GM12878 (cell line): ENCODE measurements at regions of chr20 and their contacts with region 1.

Region 1: GRCh38 chr20:13302647-13303450 is 81.8 kb downstream of the ISM1 start:
- DNase-seq: no peak
- ATAC-seq: peak; percentile 99
- H3K4me3 ChIP-seq: no peak overlapping the region
- H3K27ac ChIP-seq: no peak overlapping the region
- H3K4me1 ChIP-seq: no peaks in the 10 kb centered on the region
- H3K27me3 ChIP-seq: no peaks in the 10 kb centered on the region
- CTCF ChIP-seq: peak; percentile 55 to 83 (median 70)
- EP300 ChIP-seq: no peak
- POLR2A ChIP-seq: no peak
- RAD21 ChIP-seq: peak; percentile 64

Region 2: DNA sequence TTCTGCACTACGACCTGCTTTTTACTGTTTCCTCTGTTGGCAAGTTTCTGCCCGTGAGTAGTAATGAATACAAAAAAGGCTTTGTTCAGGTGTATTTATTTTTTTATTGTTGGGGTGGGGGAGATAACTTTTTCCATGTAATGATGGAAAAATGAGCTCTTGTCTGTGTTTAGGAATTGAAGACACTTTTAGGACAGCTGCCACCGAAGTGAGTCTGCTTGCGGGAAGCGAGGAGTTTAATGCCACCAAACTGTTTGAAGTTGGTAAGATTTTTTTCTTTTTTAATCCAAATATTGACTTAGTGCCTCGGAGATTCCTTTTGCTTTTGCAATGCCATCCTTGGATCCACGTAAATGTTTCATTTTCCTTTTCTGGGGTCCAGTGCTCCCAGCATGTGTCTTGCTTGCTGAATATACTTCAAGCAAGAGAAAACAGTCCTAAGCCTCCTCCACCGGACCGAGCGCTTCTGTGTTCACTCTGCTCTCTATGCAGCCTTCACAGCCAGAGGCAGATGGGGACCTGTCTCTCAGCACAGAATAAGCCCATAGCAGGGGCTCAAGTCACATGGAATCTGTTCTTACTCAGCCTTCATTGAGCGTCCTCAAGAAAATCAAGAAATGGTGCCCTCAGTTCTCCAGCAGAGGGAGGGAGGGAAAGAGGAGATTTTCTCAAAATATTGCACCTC is 10.5 kb before region 1 on chr20:
- CTCF ChIA-PET with region 1: interaction called, 10 read pairs
- POLR2A ChIA-PET with region 1: interaction called, 3 read pairs
- RAD21 ChIA-PET with region 1: interaction called, 4 read pairs
- SMC1A ChIA-PET with region 1: interaction called, 21 read pairs
- in situ Hi-C with region 1: no loop called
- intact Hi-C with region 1: no loop called
- DNase-seq: no peak
- ATAC-seq: no peak
- H3K4me3 ChIP-seq: no peak overlapping the region
- H3K27ac ChIP-seq: no peak overlapping the region
- H3K4me1 ChIP-seq: no peaks in the 10 kb centered on the region
- H3K27me3 ChIP-seq: no peaks in the 10 kb centered on the region; a peak in 1 of 4 replicates
- CTCF ChIP-seq: no peak
- EP300 ChIP-seq: no peak
- POLR2A ChIP-seq: no peak
- RAD21 ChIP-seq: no peak

Region 3: DNA sequence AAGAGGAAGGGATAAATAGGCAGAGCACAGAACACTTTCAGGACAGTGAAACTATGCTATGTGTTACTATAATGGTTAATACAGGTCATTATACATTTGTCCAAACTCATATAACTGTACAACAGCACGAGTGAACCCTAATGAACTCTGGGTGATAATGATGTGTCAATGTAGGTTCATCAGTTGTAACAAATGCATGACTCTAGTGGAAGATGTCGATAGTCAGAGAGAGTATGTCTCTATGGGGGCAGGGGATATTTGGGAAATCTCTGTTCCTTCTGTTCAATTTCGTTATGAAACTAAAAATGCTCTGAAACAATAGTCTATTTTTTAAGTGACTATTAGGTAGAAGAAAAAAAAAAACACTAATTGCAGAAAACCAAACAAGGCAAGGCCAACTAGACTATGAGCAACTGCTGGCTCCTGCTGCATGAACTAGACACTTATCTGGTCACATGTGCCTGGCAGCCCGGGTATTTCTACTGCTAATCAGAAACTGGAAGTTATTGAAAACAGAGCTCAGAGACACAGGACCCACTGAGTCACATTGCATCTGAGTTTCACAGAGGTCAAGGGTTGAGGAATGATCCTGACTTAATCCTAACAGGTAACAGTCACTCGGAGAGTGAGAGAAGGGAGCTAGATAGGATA is 16.1 kb after region 1 on chr20:
- CTCF ChIA-PET with region 1: interaction called, 12 read pairs
- POLR2A ChIA-PET with region 1: no interaction called
- RAD21 ChIA-PET with region 1: interaction called, 9 read pairs
- SMC1A ChIA-PET with region 1: interaction called, 10 read pairs
- in situ Hi-C with region 1: no loop called
- intact Hi-C with region 1: no loop called
- DNase-seq: no peak
- ATAC-seq: peak; percentile 68
- H3K4me3 ChIP-seq: no peak overlapping the region
- H3K27ac ChIP-seq: no peak overlapping the region
- H3K4me1 ChIP-seq: no peaks in the 10 kb centered on the region; the same call in 1 of the 2 replicates
- H3K27me3 ChIP-seq: no peaks in the 10 kb centered on the region
- CTCF ChIP-seq: no peak
- EP300 ChIP-seq: 0 out of 4 replicates have a peak, but pooled peaks of 1 of the 2 experiments have one; percentile 34
- POLR2A ChIP-seq: no peak
- RAD21 ChIP-seq: no peak

Region 4: DNA sequence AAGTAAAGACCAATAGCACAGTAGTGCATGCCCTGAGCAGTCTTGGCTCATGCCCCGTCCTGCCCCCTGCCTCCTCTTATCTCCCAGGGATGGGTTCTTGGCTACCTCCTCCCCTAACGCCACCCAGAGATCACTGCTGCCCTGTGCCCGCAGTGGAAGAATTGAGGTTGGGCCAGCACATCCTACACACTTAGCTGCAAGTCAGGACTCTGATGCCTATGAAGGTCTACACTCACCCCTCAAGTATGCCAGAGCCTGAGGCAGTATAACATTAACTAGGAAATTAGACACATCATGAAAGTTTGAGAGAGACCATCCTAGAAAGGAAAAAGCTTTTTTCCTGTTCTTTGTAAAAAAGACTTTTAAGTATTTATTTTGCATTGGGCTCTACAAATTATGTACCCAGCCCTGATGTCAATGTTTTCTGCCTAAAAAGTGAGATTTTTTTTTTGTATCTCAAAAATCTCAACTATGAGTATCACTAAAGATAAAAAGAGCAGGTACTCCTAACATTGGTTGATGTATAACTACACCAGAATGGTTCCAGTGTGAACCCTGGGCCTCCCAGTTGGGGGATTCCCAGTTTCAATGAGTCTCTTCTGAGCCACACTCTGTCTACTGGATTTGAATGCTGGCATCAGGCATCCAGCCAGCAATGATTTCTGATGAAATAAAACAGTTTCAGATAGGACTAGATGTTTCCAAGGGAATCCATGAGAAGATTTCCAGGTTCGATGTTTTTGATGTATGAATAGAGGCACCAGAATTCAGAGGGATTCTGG is 33.6 kb after region 1 on chr20:
- CTCF ChIA-PET with region 1: interaction called, 11 read pairs
- POLR2A ChIA-PET with region 1: interaction called, 3 read pairs
- RAD21 ChIA-PET with region 1: interaction called, 5 read pairs
- SMC1A ChIA-PET with region 1: interaction called, 5 read pairs
- in situ Hi-C with region 1: no loop called
- intact Hi-C with region 1: no loop called
- DNase-seq: no peak
- ATAC-seq: peak; percentile 84
- H3K4me3 ChIP-seq: no peak overlapping the region
- H3K27ac ChIP-seq: no peak overlapping the region
- H3K4me1 ChIP-seq: no peaks in the 10 kb centered on the region; the same call in 1 of the 2 replicates
- H3K27me3 ChIP-seq: no peaks in the 10 kb centered on the region
- CTCF ChIP-seq: no peak
- EP300 ChIP-seq: no peak
- POLR2A ChIP-seq: no peak
- RAD21 ChIP-seq: no peak

Region 5: GRCh38 chr20:13395232-13395631 is 92.4 kb after region 1 on chr20:
- CTCF ChIA-PET with region 1: no interaction called
- POLR2A ChIA-PET with region 1: no interaction called
- RAD21 ChIA-PET with region 1: no interaction called
- SMC1A ChIA-PET with region 1: no interaction called
- in situ Hi-C with region 1: no loop called
- intact Hi-C with region 1: no loop called
- DNase-seq: no peak
- ATAC-seq: no peak
- H3K4me3 ChIP-seq: no peak overlapping the region
- H3K27ac ChIP-seq: no peak overlapping the region
- H3K4me1 ChIP-seq: no peaks in the 10 kb centered on the region
- H3K27me3 ChIP-seq: no peaks in the 10 kb centered on the region
- CTCF ChIP-seq: no peak
- EP300 ChIP-seq: no peak
- POLR2A ChIP-seq: no peak
- RAD21 ChIP-seq: no peak